ENCODE measurements at regions of chr1 and their contacts with region 1.

Region 1: GRCh38 chr1:225777583-225778336 is at the start of gene SRP9:
- DNase-seq: peak; percentile 99 to 100 (median 100)
- ATAC-seq: peak; percentile 100
- H3K4me3 ChIP-seq: peak within 1 kb of the TSS; percentile 49 to 99 (median 78)
- H3K27ac ChIP-seq: peak within 1 kb of the TSS; percentile 85 to 97 (median 92)
- H3K4me1 ChIP-seq: peaks cover 0 to 65% (median 43%) of the 10 kb centered on the region in 12 donors
- H3K27me3 ChIP-seq: no peaks in the 10 kb centered on the region
- CTCF ChIP-seq: peak; percentile 75 to 98 (median 91)
- POLR2A ChIP-seq: peak in 1 of 2 donors; percentile 77
- total RNA-seq, gene SRP9: 151 to 187 (median 171) TPM

Region 2: GRCh38 chr1:225474986-225475820 is 302.6 kb before region 1 on chr1:
- intact Hi-C with region 1: loop called in 9 of 10 experiments (anchors 1 to 5 kb)
- DNase-seq: peak; percentile 62 to 88 (median 66)
- ATAC-seq: peak; percentile 69 to 91 (median 88)
- H3K4me3 ChIP-seq: peak overlapping the region in 5 of 12 donors; percentile 10 to 35 (median 26)
- H3K27ac ChIP-seq: peak overlapping the region in 1 of 12 donors; percentile 13
- H3K4me1 ChIP-seq: peaks cover 0 to 11% (median 5%) of the 10 kb centered on the region in 12 donors
- H3K27me3 ChIP-seq: no peaks in the 10 kb centered on the region
- CTCF ChIP-seq: peak in 11 of 12 donors; percentile 100
- POLR2A ChIP-seq: no peak

Region 3: GRCh38 chr1:225554216-225554812 is 223.4 kb before region 1 on chr1:
- intact Hi-C with region 1: loop called (anchors 2 to 5 kb)
- DNase-seq: no peak
- ATAC-seq: peak in 1 of 4 donors; percentile 43
- H3K4me3 ChIP-seq: no peak overlapping the region
- H3K27ac ChIP-seq: no peak overlapping the region
- H3K4me1 ChIP-seq: peaks cover 0 to 24% (median 5%) of the 10 kb centered on the region in 12 donors
- H3K27me3 ChIP-seq: no peaks in the 10 kb centered on the region
- CTCF ChIP-seq: peak; percentile 39 to 73 (median 60)
- POLR2A ChIP-seq: no peak

Region 4: DNA sequence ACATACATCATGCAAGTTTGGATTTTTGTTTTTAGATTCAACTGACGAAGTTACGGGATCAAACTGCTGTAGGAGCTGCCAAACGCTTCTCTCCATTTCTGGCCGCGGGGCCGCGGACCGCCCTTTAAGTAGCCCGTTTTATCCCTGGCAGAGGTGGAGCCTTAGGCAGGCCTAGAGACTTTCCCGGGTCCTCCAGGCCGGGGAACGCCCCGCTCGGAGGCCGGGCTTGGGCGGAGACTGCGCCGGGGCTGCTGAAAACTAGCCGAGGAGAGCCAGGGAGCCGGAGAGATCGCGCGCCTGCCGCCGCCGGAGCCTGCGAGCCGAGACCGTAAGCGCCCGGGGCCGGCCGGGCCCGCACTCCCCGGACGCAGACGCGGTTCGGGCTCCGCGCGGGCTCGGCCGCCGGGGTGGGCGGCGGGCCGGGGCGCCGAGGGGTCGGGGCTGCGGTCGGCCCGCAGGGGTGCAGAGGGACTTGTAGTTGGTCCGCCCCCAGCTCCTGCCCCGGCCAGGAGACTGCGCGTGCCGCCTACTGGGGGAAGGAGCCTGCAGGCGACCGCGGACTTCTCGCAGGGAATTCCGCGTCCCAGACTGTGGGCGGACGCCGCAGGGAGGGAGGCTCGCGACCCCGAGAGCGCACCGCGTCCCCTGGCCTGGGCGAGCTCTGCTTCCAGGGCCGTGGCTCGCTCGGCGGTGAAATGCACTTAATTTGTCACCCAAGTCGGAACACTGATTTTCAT is 32.2 kb after region 1 on chr1 and contains the start of gene EPHX1:
- intact Hi-C with region 1: loop called in 8 of 10 experiments (anchors 1 to 5 kb)
- DNase-seq: peak; percentile 93 to 95 (median 94)
- ATAC-seq: peak; percentile 87 to 95 (median 92)
- H3K4me3 ChIP-seq: peak within 1 kb of the TSS; percentile 38 to 95 (median 74)
- H3K27ac ChIP-seq: peak within 1 kb of the TSS; percentile 41 to 96 (median 88)
- H3K4me1 ChIP-seq: peaks cover 13 to 52% (median 38%) of the 10 kb centered on the region in 12 donors
- H3K27me3 ChIP-seq: no peaks in the 10 kb centered on the region
- CTCF ChIP-seq: peak in 9 of 12 donors; percentile 10 to 59 (median 43)
- POLR2A ChIP-seq: peak in 1 of 2 donors; percentile 83
- total RNA-seq, gene EPHX1: 29.0 to 96.8 (median 47.0) TPM

Region 5: GRCh38 chr1:225845571-225846259 is 68.0 kb after region 1 on chr1:
- intact Hi-C with region 1: loop called in 9 of 10 experiments (anchors 1 to 5 kb)
- DNase-seq: peak; percentile 77 to 87 (median 82)
- ATAC-seq: peak; percentile 66 to 83 (median 82)
- H3K4me3 ChIP-seq: no peak overlapping the region
- H3K27ac ChIP-seq: peak overlapping the region in 6 of 12 donors; percentile 6 to 71 (median 17)
- H3K4me1 ChIP-seq: peaks cover 0 to 30% (median 16%) of the 10 kb centered on the region in 12 donors
- H3K27me3 ChIP-seq: no peaks in the 10 kb centered on the region
- CTCF ChIP-seq: peak; percentile 56 to 87 (median 74)
- POLR2A ChIP-seq: no peak

Region 6: DNA sequence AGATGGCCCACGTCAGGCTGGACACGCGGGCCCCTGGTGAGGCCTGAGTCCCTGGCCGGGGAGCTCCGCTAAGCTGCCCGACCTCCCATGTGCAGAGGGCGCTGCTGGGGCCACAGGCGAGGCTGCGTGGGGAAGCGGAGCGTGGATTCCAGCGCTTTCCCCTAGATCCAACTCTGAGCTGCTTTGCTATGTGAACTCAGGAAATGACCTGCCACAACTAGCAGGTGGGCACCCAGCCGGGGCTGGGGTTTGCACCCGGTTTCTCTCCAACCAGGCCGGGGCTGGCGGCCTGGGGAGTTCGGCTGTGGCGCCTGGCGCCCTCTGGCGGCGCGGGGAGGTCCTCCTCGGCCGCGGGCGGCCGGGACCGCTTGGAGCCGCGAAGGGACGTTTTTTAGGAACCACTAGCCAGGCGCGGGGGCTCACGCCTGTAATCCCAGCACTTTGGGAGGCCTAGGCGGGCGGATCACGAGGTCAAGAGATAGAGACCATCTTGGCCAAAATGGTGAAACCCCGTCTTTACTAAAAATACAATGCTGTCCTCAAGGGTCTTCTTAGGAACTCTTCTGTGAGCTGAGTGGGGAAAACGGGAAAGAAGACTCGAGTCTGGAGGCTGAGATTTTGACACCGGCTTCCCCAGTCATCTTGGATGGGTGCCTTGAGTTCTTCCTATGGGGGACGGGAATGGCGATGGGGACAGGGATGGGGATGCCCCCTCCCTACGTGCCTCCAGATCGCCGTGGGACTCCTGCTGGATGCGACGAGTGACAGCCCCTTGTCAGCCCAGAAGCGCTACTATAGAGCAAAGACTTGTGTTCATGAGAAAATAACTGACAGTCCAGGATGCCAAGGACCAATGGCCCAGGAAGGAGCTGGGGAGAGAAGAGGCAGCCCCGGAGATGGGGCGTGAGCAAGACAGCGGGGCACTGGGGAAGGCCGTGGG is 133.7 kb after region 1 on chr1:
- intact Hi-C with region 1: loop called in 8 of 10 experiments (anchors 5 to 10 kb)
- DNase-seq: peak; percentile 51 to 89 (median 68)
- ATAC-seq: peak; percentile 71 to 93 (median 86)
- H3K4me3 ChIP-seq: peak overlapping the region in 8 of 12 donors; percentile 3 to 40 (median 17)
- H3K27ac ChIP-seq: no peak overlapping the region
- H3K4me1 ChIP-seq: peaks cover 0 to 10% (median 5%) of the 10 kb centered on the region in 12 donors
- H3K27me3 ChIP-seq: no peaks in the 10 kb centered on the region
- CTCF ChIP-seq: peak; percentile 84 to 99 (median 96)
- POLR2A ChIP-seq: no peak

Region 7: DNA sequence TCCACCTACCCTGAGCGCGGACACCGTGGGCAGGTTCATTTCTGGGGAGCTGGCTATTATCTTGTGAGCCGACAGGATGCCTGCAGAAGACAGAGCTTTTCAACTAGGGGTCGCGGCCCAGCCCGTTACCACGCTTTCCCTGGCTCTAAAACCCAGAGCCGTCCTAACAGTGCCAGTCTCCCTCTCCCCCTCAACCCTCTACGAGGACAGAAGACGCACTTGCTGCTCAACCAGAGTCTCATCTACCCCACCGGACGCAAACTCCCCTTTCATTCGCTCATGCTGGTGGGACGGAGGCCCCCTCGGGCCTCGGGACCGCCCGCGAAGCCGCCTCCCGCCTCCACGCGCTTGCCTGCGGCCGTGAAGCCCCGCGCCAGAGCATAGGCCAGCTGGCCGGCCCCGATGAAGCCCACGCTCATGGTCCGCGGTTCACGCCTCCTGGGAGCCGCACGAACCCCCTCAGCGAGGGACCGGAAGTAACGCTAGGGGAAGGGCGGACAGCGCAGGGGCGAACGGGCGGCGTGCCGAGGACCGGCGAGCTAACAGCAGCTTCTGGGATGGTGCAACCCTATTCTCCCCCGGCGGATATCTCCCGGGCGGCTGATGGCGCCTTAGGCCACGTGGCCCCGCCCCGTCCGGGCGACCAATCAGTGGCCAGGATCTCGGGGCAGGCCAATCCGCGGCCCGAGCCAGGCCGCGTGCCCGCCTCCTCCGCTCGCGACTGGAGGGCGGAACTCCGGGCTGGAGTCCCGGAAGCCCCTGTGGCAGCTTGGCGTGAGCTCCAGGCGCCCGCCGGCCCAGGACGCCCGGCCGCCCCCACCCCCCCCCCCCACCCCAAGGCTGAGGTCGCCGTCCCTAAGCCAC is 146.2 kb after region 1 on chr1 and contains the start of gene PYCR2:
- intact Hi-C with region 1: loop called in 5 of 10 experiments (anchors 5 to 10 kb)
- DNase-seq: peak; percentile 95 to 98 (median 97)
- ATAC-seq: peak; percentile 99 to 100 (median 100)
- H3K4me3 ChIP-seq: peak within 1 kb of the TSS; percentile 52 to 96 (median 82)
- H3K27ac ChIP-seq: peak within 1 kb of the TSS; percentile 67 to 97 (median 93)
- H3K4me1 ChIP-seq: peaks cover 0 to 42% (median 19%) of the 10 kb centered on the region in 12 donors
- H3K27me3 ChIP-seq: no peaks in the 10 kb centered on the region
- CTCF ChIP-seq: peak in 2 of 12 donors; percentile 8 to 11
- POLR2A ChIP-seq: peak in 1 of 2 donors; percentile 96
- total RNA-seq, gene PYCR2: 53.6 to 82.4 (median 65.1) TPM

Measured in heart left ventricle (tissue), 16 donors.